Astrocyte of the cerebellum (primary cell): ENCODE measurements at regions of chr15 and their contacts with region 1.

Region 1: DNA sequence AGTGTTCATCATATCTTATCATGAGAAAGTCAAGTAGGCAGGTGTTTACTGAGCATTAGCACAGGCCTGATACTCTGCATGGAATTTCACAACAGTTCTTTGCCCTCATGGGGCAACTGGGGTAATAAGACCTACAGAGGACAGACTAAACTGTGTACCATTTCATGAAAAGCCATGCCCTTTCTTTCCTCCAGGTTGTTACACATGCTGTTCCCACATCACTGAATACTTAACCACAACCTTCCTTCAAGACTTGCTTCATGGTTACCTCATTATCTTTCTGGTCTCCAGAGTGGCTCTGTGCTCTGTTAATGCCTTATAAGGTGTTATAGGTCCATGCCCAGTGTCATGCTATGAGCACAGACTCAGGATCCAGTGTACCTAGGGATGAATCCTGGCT is 28.2 kb upstream of the RSL24D1 start:
- DNase-seq: no peak
- H3K4me3 ChIP-seq: no peak overlapping the region
- CTCF ChIP-seq: no peak

Region 2: DNA sequence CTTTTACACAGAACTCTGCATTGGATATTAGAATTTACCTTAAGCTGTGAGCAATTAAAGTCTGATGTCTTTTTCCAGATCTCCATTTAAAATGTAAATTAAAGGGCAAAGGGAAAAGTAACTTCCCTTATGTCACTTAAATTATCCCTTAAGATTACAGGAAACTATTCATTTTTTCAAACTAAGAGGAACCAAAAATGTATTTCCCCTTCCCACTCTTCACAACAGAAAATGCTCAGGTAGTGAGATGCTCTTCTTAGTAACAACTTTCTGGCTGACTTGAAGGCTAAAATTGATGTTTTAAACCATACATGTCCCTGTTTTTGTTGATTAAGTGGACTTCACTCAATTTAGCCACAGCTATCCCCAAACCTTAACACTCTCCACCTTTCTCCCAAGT is 45.8 kb before region 1 on chr15:
- in situ Hi-C with region 1: no loop called
- DNase-seq: no peak
- H3K4me3 ChIP-seq: no peak overlapping the region
- CTCF ChIP-seq: no peak

Region 3: GRCh38 chr15:55279746-55280351 is 55.0 kb after region 1 on chr15:
- in situ Hi-C with region 1: loop called (anchors 5 kb)
- DNase-seq: peak; percentile 74
- H3K4me3 ChIP-seq: no peak overlapping the region
- CTCF ChIP-seq: no peak

Region 4: GRCh38 chr15:55343168-55343567 is 118.3 kb after region 1 on chr15:
- in situ Hi-C with region 1: no loop called
- DNase-seq: no peak
- H3K4me3 ChIP-seq: no peak overlapping the region
- CTCF ChIP-seq: no peak